Dendritic cell treated with granulocyte-macrophage colony-stimulating factor and Interleukin-4, amounts not matched to agents 40 ng/mL and 50 ng/mL, for 4 days (primary cell): ENCODE measurements at regions of chr2 and their contacts with region 1.

Region 1: DNA sequence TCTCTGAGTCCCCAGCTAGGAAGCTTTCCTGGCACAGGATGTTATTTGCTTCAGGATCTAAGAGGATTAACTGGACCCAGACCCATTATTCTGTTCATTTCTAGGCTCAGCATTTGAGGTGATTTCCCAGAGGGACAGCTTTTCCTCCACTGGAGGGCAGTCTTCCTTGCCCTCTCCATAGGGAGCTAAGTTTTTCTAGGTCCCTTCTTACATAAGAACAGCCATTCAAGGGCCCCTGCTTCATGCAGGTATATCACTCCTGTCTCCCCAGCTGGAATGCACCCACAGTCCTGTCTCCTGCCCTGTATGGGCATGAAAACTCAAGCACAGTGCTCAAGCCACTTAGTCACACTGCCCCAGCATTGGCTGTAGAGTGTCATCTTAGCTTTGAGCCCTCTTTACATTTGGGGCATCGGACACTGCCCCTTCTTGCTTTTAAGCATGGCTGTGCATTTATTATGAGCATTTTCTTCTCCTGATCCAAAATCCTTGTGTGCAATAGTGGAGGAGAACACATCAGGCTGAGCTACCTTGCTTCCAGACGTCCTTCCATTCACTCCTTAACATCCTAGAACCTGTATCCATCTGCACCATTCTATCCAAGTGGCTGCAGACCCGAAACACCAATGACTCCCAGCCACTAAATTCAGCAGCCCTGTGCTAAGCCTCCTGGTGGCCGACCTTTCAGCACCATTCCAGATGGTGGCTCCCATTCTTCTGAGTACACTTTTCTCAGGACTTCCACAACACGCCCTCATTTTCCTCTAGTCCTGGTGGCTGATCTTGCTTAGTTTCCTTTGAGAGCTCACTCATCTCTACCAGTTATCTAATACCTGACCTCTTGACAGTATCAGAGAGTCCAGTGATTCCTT is 80.0 kb downstream of the COPS8 start:
- H3K4me3 Mint-ChIP-seq: no peak overlapping the region
- H3K27ac Mint-ChIP-seq: no peak overlapping the region
- H3K4me1 Mint-ChIP-seq: no peaks in the 10 kb centered on the region
- H3K27me3 Mint-ChIP-seq: peaks cover 25% of the 10 kb centered on the region

Region 2: GRCh38 chr2:237408335-237409000 is 242.8 kb after region 1 on chr2:
- intact Hi-C with region 1: loop called (anchors 10 kb)
- H3K4me3 Mint-ChIP-seq: no peak overlapping the region
- H3K27ac Mint-ChIP-seq: no peak overlapping the region
- H3K4me1 Mint-ChIP-seq: no peaks in the 10 kb centered on the region
- H3K27me3 Mint-ChIP-seq: peaks cover 22% of the 10 kb centered on the region